H1 (cell line): ENCODE measurements at regions of chr6 and their contacts with region 1.

Region 1: GRCh38 chr6:144482142-144482541 is 197.0 kb downstream of the UTRN start:
- DNase-seq: peak; percentile 43 to 69
- H3K4me3 ChIP-seq: no peak overlapping the region
- H3K27ac ChIP-seq: no peak overlapping the region
- H3K4me1 ChIP-seq: no peaks in the 10 kb centered on the region
- H3K27me3 ChIP-seq: no peaks in the 10 kb centered on the region
- CTCF ChIP-seq: peak; percentile 42 to 85 (median 74)
- EP300 ChIP-seq: no peak
- POLR2A ChIP-seq: no peak
- RAD21 ChIP-seq: peak; percentile 80 to 84

Region 2: DNA sequence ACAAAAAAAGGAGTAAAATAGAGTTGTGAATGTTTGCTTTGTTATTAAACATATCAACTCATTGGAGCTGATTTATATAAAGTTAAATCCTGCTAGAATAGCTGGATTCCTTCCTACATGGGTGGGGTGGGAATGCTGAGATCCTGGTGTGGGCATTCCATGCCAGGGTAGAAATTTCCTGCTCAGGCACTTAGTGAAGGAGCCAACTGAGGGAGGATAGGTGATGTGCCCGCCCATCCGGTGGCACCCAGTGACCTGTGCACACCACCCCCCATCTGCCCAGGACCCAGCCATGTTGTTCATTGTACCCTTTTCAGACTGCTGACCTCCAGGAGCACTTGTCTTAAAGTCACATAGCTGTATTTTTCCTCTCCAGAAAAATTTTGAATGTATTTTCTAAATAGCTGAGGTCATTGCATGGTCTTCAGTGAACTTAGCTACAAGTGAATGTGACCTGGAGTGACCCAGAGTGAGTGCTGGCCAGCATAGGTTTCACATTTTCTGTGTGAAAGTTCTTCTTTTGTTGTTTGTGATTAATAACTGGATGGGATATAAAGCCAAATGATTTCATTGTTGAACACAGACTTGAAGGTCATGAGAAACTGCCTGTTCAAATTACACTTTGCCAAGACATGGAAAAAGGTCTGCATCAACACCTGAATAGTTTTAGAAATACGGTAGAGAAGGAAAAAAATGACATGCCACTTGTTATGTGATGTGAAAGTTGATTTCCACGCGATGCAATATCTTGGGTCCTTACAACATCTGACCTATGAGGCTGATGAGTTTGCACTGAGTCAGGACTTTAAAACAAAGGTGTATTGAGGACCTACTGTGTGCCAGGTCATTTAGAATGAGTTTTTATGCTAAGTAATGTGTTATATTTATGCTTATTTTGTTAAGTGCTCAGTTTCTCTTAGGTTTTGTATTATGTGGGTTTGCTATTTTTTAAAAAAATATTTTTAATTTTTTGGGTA is 119.8 kb before region 1 on chr6:
- CTCF ChIA-PET with region 1: no interaction called
- POLR2A ChIA-PET with region 1: no interaction called
- DNase-seq: no peak
- H3K4me3 ChIP-seq: no peak overlapping the region
- H3K27ac ChIP-seq: no peak overlapping the region
- H3K4me1 ChIP-seq: peaks cover 0 to 13% (median 2%) of the 10 kb centered on the region in 4 experiments; a peak in 2 of 7 replicates
- H3K27me3 ChIP-seq: no peaks in the 10 kb centered on the region
- CTCF ChIP-seq: no peak
- EP300 ChIP-seq: no peak
- POLR2A ChIP-seq: no peak
- RAD21 ChIP-seq: no peak

Region 3: DNA sequence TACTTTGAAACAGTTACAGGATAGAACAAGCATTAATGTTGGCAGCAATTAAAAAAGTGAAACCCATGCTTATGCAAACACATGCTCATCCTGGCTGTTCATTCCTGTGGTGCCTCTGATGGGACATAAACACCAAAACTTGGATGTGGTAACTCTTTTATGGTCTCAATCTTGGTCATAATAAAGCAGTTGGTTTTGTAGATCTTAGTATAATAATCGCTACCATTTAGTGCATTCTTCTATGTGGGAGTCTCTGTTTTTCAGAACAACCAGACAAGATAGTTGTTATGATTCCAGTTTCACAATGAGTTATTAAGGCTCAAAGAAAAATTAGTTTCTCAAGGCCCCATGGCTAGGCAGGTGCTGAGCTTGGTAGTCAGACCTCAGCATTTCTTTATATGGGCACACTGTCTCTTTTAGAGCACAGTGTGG is 13.0 kb before region 1 on chr6:
- CTCF ChIA-PET with region 1: interaction called, 13 read pairs
- POLR2A ChIA-PET with region 1: interaction called, 5 read pairs
- DNase-seq: no peak
- H3K4me3 ChIP-seq: no peak overlapping the region
- H3K27ac ChIP-seq: no peak overlapping the region
- H3K4me1 ChIP-seq: peaks cover 0 to 7% (median 5%) of the 10 kb centered on the region in 4 experiments; a peak in 3 of 7 replicates
- H3K27me3 ChIP-seq: no peaks in the 10 kb centered on the region
- CTCF ChIP-seq: no peak
- EP300 ChIP-seq: no peak
- POLR2A ChIP-seq: no peak
- RAD21 ChIP-seq: no peak